Panc1 (cell line): ENCODE measurements at regions of chr12 and their contacts with region 1.

Region 1: GRCh38 chr12:126337556-126338441 is 1272.6 kb downstream of the AACS start:
- DNase-seq: no peak
- ATAC-seq: no peak
- H3K4me3 ChIP-seq: no peak overlapping the region
- H3K27ac ChIP-seq: no peak overlapping the region
- H3K4me1 ChIP-seq: no peaks in the 10 kb centered on the region
- H3K27me3 ChIP-seq: no peaks in the 10 kb centered on the region
- CTCF ChIP-seq: no peak

Region 2: GRCh38 chr12:126389220-126389841 is 51.5 kb after region 1 on chr12:
- CTCF ChIA-PET with region 1: no interaction called
- POLR2A ChIA-PET with region 1: no interaction called
- in situ Hi-C with region 1: no loop called
- intact Hi-C with region 1: no loop called
- DNase-seq: no peak
- ATAC-seq: no peak
- H3K4me3 ChIP-seq: no peak overlapping the region
- H3K27ac ChIP-seq: no peak overlapping the region
- H3K4me1 ChIP-seq: no peaks in the 10 kb centered on the region
- H3K27me3 ChIP-seq: no peaks in the 10 kb centered on the region
- CTCF ChIP-seq: no peak

Region 3: DNA sequence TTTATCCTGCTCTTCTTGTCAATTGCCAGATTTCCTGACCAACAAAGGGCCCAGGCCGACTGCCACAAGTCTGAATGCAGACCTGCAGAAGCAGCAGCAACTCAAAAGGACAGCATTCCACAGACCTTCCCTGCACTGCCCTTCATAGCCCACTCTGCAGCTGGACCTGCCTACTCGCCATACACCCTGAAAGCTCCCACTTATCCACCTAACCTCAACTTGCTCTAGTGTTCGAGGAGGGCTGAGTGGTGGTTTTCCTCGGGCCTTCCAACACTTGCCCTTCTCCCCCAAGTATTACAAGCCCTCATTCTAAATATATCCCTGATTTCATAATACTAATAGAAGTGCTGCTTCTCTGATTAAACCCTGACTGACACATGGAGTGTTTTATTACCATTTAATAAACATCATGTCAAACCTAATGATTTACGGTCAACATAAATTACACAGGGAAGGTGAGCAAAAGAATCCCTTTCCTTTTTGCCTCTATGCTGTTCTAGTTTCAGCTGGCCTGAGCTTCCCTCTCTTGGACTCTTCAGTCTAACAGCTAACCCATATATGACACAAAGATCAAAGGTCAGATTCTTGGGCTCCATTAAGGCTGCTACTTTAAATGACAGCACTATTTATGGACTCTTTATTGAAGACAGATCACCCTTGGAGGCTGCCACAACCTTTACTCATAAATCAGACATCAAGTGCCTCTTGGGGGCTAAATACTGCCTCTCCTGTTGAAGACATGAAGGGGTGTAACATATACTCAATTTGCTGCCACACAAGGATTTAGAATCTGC is 382.3 kb after region 1 on chr12:
- CTCF ChIA-PET with region 1: no interaction called
- POLR2A ChIA-PET with region 1: interaction called, 10 read pairs
- in situ Hi-C with region 1: no loop called
- intact Hi-C with region 1: no loop called
- DNase-seq: no peak
- ATAC-seq: no peak
- H3K4me3 ChIP-seq: no peak overlapping the region
- H3K27ac ChIP-seq: no peak overlapping the region
- H3K4me1 ChIP-seq: no peaks in the 10 kb centered on the region
- H3K27me3 ChIP-seq: no peaks in the 10 kb centered on the region
- CTCF ChIP-seq: no peak